ENCODE measurements at regions of chr7 and their contacts with region 1.

Region 1: DNA sequence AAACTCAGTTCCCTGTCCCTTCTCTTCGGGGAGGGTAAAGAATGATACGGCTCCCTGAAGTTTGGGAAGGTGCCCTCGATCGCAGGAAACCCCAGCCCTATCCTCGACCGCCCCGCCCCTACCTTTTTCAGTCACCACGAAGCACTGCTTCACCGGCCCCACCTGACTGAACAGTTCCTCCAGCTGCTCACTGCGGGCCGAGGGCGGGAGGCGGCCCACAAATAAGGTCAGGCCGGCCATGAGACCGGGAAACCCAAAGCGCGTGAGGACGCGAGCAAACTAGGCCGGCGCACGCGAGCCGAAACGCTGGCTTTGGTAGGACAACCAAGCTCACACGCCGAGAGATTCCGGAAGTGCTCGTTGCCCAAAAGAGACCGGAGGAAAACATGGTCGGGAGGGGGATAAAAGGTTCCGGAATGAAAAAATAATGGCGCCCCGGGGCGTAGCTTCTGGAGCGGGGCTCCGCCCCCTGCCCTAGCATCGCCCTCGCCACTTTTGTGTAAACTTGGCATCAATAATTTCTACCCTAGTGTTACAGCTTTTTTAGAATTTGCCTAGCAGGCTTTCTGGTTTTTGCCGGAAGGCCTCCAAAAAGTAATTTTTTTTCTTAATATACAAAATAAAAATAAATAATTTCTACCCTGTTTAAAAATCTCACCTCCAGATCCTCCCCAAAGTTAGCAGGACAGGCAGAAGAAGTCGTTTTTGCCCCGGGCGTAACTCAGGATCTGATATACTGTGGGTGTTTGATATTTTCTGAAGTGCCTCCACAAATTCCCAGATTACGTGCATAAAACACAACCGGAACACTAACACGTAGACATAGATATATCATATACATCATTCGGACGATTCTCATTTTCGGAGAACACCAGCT is at the start of gene RBM28:
- DNase-seq: peak; percentile 96
- H3K4me3 Mint-ChIP-seq: peak within 1 kb of the TSS; percentile 98
- H3K27ac Mint-ChIP-seq: peak within 1 kb of the TSS; percentile 96
- H3K4me1 Mint-ChIP-seq: peaks cover 26% of the 10 kb centered on the region
- H3K27me3 Mint-ChIP-seq: peaks cover 15% of the 10 kb centered on the region
- total RNA-seq, gene RBM28: 76.7 and 85.8 TPM in 2 replicates

Region 2: DNA sequence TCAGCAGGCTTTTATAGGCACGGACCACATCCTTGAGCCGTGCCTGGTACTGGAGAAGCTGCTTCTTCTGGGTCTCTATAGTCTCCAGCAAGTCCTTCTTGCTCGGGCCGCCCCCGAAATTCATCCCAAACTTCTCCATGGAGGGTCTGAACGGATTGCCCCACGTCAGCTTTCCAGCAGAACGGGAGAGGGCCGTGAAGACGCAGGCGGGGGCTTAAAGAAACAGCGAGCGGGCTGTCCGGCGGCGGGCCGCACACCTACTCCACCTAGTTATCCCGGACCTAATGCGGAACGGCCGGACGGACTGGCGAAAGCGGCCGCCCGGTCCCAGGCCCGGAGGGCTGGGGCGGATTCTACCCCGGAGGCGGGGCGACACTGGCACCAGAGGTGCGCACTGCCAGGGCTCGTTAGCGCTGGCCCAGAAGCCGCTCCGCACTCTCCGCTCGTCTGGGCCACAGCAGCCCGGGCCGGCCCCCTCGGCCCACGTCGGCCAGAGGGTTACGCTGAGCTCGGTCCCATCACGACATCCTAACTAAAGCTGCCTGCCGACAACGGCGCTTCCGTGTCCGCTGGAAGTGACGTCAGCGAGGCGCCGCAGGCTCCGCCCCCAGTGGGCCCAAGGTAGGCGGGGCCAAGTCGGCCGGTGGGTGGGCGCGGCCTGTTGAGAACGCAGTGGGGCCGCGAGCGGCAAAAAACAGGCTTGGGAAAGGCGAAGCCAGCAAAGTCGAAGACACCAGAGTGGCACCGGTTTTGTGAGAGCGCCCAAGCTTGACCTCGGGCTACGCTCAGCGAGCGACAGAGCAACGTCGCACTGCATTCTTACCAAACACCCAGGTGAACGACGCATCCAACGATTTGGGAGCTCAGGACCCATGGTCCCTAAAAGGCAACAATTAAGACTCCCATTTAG is 758.5 kb before region 1 on chr7 and contains the start of gene GCC1:
- intact Hi-C with region 1: loop called (anchors 5 kb)
- DNase-seq: peak; percentile 99
- H3K4me3 Mint-ChIP-seq: peak within 1 kb of the TSS; percentile 94
- H3K27ac Mint-ChIP-seq: peak within 1 kb of the TSS; percentile 89
- H3K4me1 Mint-ChIP-seq: peaks cover 43% of the 10 kb centered on the region
- H3K27me3 Mint-ChIP-seq: no peaks in the 10 kb centered on the region
- total RNA-seq, gene GCC1: 14.8 and 15.6 TPM in 2 replicates

Region 3: GRCh38 chr7:128387216-128388144 is 43.7 kb after region 1 on chr7:
- intact Hi-C with region 1: loop called (anchors 1 kb)
- DNase-seq: peak; percentile 89
- H3K4me3 Mint-ChIP-seq: no peak overlapping the region
- H3K27ac Mint-ChIP-seq: no peak overlapping the region
- H3K4me1 Mint-ChIP-seq: no peaks in the 10 kb centered on the region
- H3K27me3 Mint-ChIP-seq: peaks cover 3% of the 10 kb centered on the region

Region 4: GRCh38 chr7:128883622-128884501 is 540.1 kb after region 1 on chr7:
- intact Hi-C with region 1: no loop called
- DNase-seq: peak; percentile 95
- H3K4me3 Mint-ChIP-seq: no peak overlapping the region
- H3K27ac Mint-ChIP-seq: no peak overlapping the region
- H3K4me1 Mint-ChIP-seq: peaks cover 2% of the 10 kb centered on the region
- H3K27me3 Mint-ChIP-seq: peaks cover 2% of the 10 kb centered on the region

Region 5: DNA sequence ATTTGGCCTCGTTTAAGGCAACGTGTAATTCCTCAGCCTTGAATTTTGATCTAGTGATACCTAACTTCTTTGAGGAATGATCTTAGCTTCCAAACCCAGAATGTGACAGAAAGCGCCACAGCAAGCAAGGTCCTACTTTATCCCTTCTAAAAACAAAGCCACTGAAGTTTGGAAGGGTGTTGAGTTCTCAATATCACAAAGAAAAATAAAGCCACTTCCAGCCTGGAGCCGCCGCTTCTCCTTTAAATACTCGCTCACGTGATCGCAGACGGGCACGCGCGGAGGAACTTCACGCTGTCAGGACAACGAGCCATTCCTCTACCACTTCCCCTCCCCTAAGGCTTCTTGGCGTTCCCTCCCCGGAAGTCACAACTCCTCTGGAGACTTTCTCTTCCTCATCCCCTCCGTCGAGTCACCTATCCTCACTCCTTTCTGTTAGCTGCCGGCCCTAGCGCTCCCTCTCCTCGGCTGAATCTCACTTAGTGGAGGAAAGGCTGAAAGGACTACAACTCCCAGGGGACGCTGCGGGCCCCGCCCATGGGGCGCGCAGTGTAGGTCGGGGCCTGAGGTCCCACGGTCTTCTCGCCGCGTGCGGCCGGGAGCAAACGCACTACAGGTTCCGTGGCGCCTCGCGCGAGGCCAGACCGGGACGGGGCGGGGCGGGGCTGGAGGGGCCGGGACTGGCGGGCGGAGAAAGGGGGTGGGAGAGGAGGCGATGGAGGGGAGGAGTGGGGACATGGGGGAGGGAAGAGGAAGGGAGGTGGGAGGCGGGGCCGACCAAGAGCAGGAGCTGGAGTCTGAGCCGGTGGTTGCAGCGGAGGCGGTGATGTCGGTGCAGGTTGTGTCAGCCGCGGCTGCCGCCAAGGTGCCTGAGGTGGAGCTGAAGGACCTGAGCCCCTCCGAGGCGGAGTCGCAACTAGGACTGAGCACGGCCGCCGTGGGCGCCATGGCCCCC is 880.7 kb after region 1 on chr7 and contains the start of gene AHCYL2:
- intact Hi-C with region 1: loop called (anchors 10 kb)
- DNase-seq: peak; percentile 98
- H3K4me3 Mint-ChIP-seq: peak within 1 kb of the TSS; percentile 87
- H3K27ac Mint-ChIP-seq: peak within 1 kb of the TSS; percentile 96
- H3K4me1 Mint-ChIP-seq: peaks cover 24% of the 10 kb centered on the region
- H3K27me3 Mint-ChIP-seq: no peaks in the 10 kb centered on the region
- total RNA-seq, gene AHCYL2: 10.7 and 11.1 TPM in 2 replicates